ENCODE measurements at regions of chr9 and their contacts with region 1.

Region 1: DNA sequence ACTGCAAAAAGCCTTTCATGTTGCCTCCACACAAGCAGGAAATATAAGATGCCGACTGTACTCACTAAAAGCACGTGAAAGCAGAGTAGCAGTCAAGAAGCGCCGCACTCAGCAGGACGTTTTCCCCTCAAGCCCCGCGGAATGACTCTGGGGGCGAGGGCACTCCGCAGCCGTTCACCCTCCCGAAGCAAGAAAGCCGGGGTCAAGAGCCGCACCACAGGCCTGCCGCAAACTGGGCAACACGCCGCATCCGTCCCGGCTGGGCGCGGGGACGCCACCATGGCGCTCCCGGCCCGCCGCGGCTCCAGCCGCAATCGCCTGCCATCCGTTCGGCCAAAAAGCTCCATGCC is 364 bp downstream of the RPS6 start:
- DNase-seq: no peak
- H3K4me3 Mint-ChIP-seq: peak overlapping the region; percentile 95
- H3K27ac Mint-ChIP-seq: peak overlapping the region; percentile 95
- H3K4me1 Mint-ChIP-seq: peaks cover 45% of the 10 kb centered on the region
- H3K27me3 Mint-ChIP-seq: no peaks in the 10 kb centered on the region

Region 2: DNA sequence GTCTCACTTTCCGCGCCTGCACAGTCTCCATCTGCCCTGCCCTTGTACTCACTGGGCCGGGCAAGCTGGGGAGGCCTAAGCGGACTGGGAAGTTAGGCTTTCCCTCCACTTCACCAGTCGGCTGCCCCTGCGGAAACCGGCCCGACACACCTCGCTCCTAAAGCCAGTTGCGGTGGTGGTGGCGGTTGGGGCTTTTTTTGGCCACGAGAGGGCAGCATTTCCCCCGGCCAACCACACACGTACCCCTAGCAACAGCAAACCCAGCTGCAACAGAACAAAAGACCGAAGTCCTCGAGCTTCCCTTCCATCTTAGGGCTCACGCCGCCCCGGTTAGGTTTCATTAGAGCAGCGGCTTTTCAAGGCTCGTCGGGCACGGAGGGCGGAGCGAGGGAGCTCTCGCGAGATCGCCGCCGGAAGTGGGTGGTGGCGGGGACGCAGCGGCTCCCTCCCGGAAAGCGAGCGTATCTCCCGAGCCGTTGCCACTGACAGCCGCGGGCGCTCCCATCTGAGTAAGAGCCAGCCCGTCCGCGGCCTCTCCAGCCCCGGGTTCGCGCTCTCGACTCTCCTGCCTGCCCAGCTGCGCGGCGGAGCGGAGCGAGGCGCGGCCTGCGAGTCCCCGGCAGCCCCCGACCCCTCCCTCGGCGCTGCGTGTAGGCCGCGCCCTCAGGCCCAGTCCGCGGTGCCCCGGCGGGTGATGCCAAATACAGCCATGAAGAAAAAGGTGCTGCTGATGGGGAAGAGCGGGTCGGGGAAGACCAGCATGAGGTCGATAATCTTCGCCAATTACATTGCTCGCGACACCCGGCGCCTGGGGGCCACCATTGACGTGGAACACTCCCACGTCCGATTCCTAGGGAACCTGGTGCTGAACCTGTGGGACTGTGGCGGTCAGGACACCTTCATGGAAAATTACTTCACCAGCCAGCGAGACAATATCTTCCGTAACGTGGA is 330.4 kb before region 1 on chr9 and contains the start of gene RRAGA:
- intact Hi-C with region 1: loop called (anchors 1 kb)
- DNase-seq: peak; percentile 99
- H3K4me3 Mint-ChIP-seq: peak within 1 kb of the TSS; percentile 95
- H3K27ac Mint-ChIP-seq: peak within 1 kb of the TSS; percentile 99
- H3K4me1 Mint-ChIP-seq: peaks cover 32% of the 10 kb centered on the region
- H3K27me3 Mint-ChIP-seq: no peaks in the 10 kb centered on the region
- total RNA-seq, gene RRAGA: 54.1 and 54.3 TPM in 2 replicates

Region 3: DNA sequence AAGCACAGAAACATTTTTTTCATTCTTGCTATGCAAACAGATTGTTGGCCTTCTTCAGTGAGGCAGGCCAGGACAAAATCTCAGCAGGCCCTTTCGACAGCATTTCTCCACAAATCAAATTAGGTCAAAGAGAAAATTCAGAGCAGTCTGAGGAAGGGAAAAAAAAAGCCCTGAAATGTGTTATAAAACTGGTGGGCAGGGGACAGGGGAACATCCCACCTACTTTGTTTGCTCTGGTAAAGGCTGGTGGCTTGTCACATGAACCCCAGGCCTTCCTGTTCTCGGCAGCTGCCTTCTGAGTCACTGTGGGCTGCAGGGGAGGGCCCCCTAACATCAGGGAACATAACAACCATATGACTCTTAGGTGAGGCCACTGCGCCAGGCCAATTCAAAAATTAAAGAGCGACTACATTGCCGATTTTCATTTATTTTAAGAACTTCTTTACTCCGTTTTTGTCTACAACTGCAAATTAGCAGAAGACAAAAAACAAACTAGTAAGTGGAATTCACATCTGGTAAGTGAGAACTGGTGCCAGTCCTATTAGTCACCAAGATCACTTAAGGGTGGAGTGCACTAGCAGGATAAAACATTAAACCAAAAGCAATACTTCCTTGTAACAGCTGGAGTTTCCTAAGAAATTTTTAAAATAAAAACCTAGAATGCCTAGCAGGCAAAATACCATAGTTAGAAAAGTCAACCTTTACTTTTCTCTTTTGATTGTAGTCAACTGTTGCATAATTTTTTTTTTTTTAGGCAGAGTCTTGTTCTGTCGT is 195.3 kb before region 1 on chr9:
- intact Hi-C with region 1: loop called (anchors 5 kb)
- DNase-seq: peak; percentile 91
- H3K4me3 Mint-ChIP-seq: peak overlapping the region; percentile 75
- H3K27ac Mint-ChIP-seq: peak overlapping the region; percentile 90
- H3K4me1 Mint-ChIP-seq: peaks cover 19% of the 10 kb centered on the region
- H3K27me3 Mint-ChIP-seq: no peaks in the 10 kb centered on the region

Region 4: GRCh38 chr9:19408693-19409400 is 29.2 kb after region 1 on chr9 and contains the start of gene ACER2:
- intact Hi-C with region 1: loop called (anchors 1 kb)
- DNase-seq: peak; percentile 99
- H3K4me3 Mint-ChIP-seq: peak within 1 kb of the TSS; percentile 93
- H3K27ac Mint-ChIP-seq: peak within 1 kb of the TSS; percentile 81
- H3K4me1 Mint-ChIP-seq: peaks cover 12% of the 10 kb centered on the region
- H3K27me3 Mint-ChIP-seq: peaks cover 4% of the 10 kb centered on the region
- total RNA-seq, gene ACER2: 0.96 and 1.3 TPM in 2 replicates

Measured in activated CD4-positive, alpha-beta T cell treated with anti-CD3 and anti-CD28 coated beads, Interleukin-2, amount 10 ng/mL, durations not matched to agents 24 days and 14 days (primary cell).